ENCODE measurements at regions of chr17 and their contacts with region 1.

Region 1: GRCh38 chr17:49108318-49108717 is 24.3 kb upstream of the B4GALNT2 start:
- DNase-seq: no peak
- ATAC-seq: no peak
- H3K4me3 ChIP-seq: no peak overlapping the region
- H3K27ac ChIP-seq: no peak overlapping the region
- H3K4me1 ChIP-seq: peaks cover 50% of the 10 kb centered on the region
- H3K27me3 ChIP-seq: no peaks in the 10 kb centered on the region
- CTCF ChIP-seq: no peak
- EP300 ChIP-seq: no peak
- POLR2A ChIP-seq: no peak
- RAD21 ChIP-seq: no peak

Region 2: DNA sequence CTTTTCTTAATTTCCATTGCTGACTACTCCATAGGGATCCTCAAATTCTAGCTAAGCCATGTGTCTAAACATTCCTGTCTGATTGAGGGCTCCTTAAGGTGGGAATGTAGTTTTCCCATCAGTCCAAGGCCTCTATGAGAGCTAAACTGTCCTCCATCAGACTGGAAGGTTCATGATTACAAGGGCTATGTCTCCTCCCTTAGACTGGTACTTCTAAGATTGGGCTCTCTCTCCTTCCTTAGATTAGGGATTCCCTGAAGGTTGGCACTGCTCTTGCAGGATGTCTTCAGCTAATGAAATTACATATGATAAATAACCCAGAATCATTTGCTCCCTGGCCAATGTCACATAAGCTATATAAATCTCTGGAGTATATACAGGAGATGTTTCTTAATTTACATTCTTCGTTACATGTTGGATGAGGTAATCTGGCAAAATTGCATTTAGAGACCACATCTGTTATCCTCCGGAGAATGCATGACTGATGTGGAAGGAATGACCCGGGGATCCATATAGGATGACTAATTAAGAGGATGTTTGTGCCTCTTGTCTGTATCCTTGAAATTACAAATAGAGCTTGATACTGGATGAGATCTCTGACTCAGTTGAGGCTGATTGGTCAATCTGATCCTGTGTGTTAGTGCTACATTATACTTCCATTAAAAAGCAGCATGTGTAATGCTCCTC is 38.4 kb after region 1 on chr17:
- CTCF ChIA-PET with region 1: no interaction called
- POLR2A ChIA-PET with region 1: no interaction called
- in situ Hi-C with region 1: no loop called
- intact Hi-C with region 1: no loop called
- DNase-seq: peak; percentile 65
- ATAC-seq: no peak
- H3K4me3 ChIP-seq: no peak overlapping the region
- H3K27ac ChIP-seq: no peak overlapping the region
- H3K4me1 ChIP-seq: peaks cover 32% of the 10 kb centered on the region
- H3K27me3 ChIP-seq: peaks cover under 1 to 10% of the 10 kb centered on the region in 2 experiments; a peak in 2 of 5 replicates
- CTCF ChIP-seq: no peak
- EP300 ChIP-seq: no peak
- POLR2A ChIP-seq: no peak
- RAD21 ChIP-seq: no peak

Region 3: GRCh38 chr17:49191917-49192741 is 83.8 kb after region 1 on chr17:
- CTCF ChIA-PET with region 1: no interaction called
- POLR2A ChIA-PET with region 1: interaction called, 4 read pairs
- in situ Hi-C with region 1: no loop called
- intact Hi-C with region 1: loop called (anchors 5 kb)
- DNase-seq: peak; percentile 90
- ATAC-seq: peak; percentile 71
- H3K4me3 ChIP-seq: peak overlapping the region; percentile 75 to 80 (median 76)
- H3K27ac ChIP-seq: peak overlapping the region; percentile 88
- H3K4me1 ChIP-seq: peaks cover 18% of the 10 kb centered on the region
- H3K27me3 ChIP-seq: peaks cover 0 to 2% of the 10 kb centered on the region in 2 experiments; a peak in 1 of 5 replicates
- CTCF ChIP-seq: peak; percentile 83
- EP300 ChIP-seq: peak in 1 of 2 experiments; percentile 28; a peak in 1 of 4 replicates
- POLR2A ChIP-seq: peak in 1 of 2 experiments; percentile 57; a peak in 3 of 4 replicates
- RAD21 ChIP-seq: no peak; the same call in none of the 2 replicates